SK-N-SH (cell line): ENCODE measurements at regions of chr17 and their contacts with region 1.

Region 1: GRCh38 chr17:8118769-8119580 is 661 bp upstream of the ALOXE3 start:
- DNase-seq: peak; percentile 87
- H3K4me3 ChIP-seq: peak overlapping the region; percentile 53 to 79
- H3K27ac ChIP-seq: peak overlapping the region; percentile 62 to 63
- H3K4me1 ChIP-seq: peaks cover 0 to 28% of the 10 kb centered on the region in 2 experiments; a peak in 2 of 4 replicates
- H3K27me3 ChIP-seq: peaks cover 23% of the 10 kb centered on the region; the same call in 1 of the 2 replicates
- CTCF ChIP-seq: peak; percentile 94
- EP300 ChIP-seq: no peak; a peak in 1 of 4 replicates
- RAD21 ChIP-seq: peak; percentile 57

Region 2: GRCh38 chr17:8079291-8080207 is 39.4 kb before region 1 on chr17:
- CTCF ChIA-PET with region 1: interaction called, 298 read pairs
- POLR2A ChIA-PET with region 1: no interaction called
- DNase-seq: peak; percentile 95
- H3K4me3 ChIP-seq: peak overlapping the region; percentile 49 to 63
- H3K27ac ChIP-seq: peak overlapping the region in 1 of 2 experiments; percentile 58; a peak in 1 of 4 replicates
- H3K4me1 ChIP-seq: peaks cover 0 to 6% of the 10 kb centered on the region in 2 experiments; a peak in 1 of 4 replicates
- H3K27me3 ChIP-seq: peaks cover 33% of the 10 kb centered on the region
- CTCF ChIP-seq: peak; percentile 79
- EP300 ChIP-seq: no peak
- RAD21 ChIP-seq: peak; percentile 60

Region 3: DNA sequence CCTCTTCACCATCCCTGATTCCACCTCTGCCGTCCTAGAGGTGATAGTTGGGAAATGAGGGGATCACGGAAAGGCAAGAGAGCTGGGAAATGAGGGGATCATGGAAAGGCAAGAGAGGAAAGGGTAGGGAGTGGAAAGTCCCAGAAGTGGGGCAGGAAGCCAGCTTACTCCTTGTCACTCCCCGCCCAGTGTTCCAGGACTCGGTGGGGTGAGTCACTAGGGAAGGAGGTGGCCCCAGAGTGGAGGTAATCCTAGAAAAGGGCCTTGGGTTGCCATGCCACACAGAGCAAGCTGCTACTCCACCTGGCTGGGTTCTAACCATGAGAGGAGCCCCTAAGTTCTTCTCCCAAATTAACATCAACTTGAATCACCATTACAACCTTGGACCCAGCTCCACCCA is 15.4 kb before region 1 on chr17:
- CTCF ChIA-PET with region 1: interaction called, 18 read pairs
- POLR2A ChIA-PET with region 1: no interaction called
- DNase-seq: no peak
- H3K4me3 ChIP-seq: no peak overlapping the region
- H3K27ac ChIP-seq: no peak overlapping the region
- H3K4me1 ChIP-seq: no peaks in the 10 kb centered on the region
- H3K27me3 ChIP-seq: no peaks in the 10 kb centered on the region
- CTCF ChIP-seq: no peak
- EP300 ChIP-seq: no peak
- RAD21 ChIP-seq: no peak

Region 4: DNA sequence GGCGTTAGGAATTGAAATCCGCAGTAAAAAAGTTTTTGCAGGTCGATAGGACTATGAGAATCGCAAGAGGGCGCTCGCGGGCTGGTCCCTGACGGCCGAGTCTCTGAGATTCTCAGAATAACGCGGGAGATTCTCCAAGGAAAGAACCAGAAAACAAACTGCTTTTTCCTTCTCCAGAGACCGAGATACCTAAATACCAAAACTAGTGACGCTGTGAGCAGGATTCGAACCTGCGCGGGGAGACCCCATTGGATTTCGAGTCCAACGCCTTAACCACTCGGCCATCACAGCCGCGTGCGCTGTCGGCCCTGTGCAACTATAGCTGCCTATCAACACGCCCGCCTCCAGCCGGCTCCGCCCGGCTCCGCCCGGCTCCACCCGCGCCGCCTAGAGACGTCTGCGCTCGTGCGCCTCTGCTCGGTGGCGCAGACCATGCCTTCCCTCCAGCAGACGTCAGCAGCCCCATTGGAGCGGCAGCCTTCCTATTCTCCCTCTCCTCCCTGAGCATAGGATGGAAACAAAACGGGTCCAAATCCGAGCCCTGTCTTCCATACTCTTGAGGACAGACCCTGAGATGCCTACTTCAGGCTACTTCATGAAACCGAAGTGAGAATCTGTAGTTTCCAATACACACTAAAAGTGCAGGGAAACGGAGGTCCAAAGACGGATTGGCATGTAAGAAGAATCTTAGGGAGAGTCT is 19.8 kb after region 1 on chr17:
- CTCF ChIA-PET with region 1: interaction called, 46 read pairs
- POLR2A ChIA-PET with region 1: no interaction called
- DNase-seq: peak; percentile 94
- H3K4me3 ChIP-seq: peak overlapping the region; percentile 57 to 62
- H3K27ac ChIP-seq: peak overlapping the region; percentile 77 to 78
- H3K4me1 ChIP-seq: peaks cover 0 to 5% of the 10 kb centered on the region in 2 experiments; a peak in 1 of 4 replicates
- H3K27me3 ChIP-seq: no peaks in the 10 kb centered on the region
- CTCF ChIP-seq: peak; percentile 91
- EP300 ChIP-seq: peak in 1 of 2 experiments; percentile 24; a peak in 1 of 4 replicates
- RAD21 ChIP-seq: peak; percentile 78

Region 5: GRCh38 chr17:8156246-8156992 is 37.4 kb after region 1 on chr17:
- CTCF ChIA-PET with region 1: interaction called, 16 read pairs
- POLR2A ChIA-PET with region 1: no interaction called
- DNase-seq: peak; percentile 92
- H3K4me3 ChIP-seq: peak overlapping the region; percentile 54 to 78
- H3K27ac ChIP-seq: peak overlapping the region; percentile 91 to 95
- H3K4me1 ChIP-seq: peaks cover 36 to 47% of the 10 kb centered on the region in 2 experiments; a peak in 3 of 4 replicates
- H3K27me3 ChIP-seq: no peaks in the 10 kb centered on the region
- CTCF ChIP-seq: no peak; the same call in 1 of the 2 replicates
- EP300 ChIP-seq: no peak
- RAD21 ChIP-seq: 0 out of 2 replicates have a peak, but pooled peaks have one; percentile 30

Region 6: GRCh38 chr17:8222630-8223356 is 103.8 kb after region 1 on chr17:
- CTCF ChIA-PET with region 1: interaction called, 41 read pairs
- POLR2A ChIA-PET with region 1: interaction called, 5 read pairs
- DNase-seq: peak; percentile 76
- H3K4me3 ChIP-seq: peak overlapping the region; percentile 83 to 86
- H3K27ac ChIP-seq: peak overlapping the region; percentile 92 to 95
- H3K4me1 ChIP-seq: peaks cover 8 to 22% of the 10 kb centered on the region in 2 experiments; a peak in 3 of 4 replicates
- H3K27me3 ChIP-seq: no peaks in the 10 kb centered on the region
- CTCF ChIP-seq: no peak
- EP300 ChIP-seq: no peak
- RAD21 ChIP-seq: no peak